PC-3 (cell line): ENCODE measurements at regions of chr2 and their contacts with region 1.

Region 1: DNA sequence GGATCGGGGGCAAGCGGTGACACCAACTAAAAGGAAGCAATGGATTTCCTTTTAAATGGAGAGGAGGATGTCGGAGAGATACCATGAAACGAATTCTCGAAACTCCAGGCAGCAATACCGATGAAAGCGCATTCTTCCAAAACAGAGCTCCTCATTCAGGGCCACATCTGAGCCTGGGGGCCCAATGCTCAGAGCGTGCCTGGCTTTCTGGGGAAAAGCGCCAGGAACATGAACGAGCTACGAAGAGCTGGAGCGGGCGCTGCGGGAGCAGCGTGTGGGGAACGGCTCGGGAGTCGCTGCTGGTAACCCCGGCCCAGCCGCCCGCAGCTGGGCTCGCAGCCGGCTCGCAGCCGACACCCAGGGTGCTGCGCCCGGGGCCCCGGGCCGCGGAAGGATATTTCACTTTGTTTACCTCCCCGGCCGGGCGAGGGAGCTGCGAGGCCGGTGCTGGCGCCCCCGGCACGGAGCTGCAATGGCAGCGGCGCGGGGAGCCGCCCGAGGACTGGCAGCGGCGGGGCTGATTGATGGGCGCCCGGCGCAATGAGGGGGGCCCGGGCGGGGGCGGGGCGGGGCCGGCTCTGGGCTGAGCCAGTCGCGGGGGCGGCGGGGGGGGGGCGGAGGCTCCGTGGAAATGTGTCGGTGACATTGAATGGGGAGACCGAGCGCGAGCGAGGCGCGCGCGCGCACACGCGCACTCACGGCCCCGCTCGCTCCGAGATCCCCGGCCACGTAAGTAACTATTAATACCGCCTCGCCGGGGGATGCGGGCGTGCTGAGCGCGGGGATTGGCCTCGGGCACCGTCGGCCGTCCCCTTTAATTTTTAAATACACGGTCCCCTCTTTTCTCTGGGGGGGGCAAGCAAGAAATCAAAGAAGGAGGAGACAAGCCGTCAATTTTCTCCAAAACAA is at the start of gene TRIB2:
- DNase-seq: peak; percentile 82
- ATAC-seq: peak; percentile 53
- H3K4me3 ChIP-seq: peak within 1 kb of the TSS; percentile 95
- H3K27ac ChIP-seq: peak within 1 kb of the TSS; percentile 99
- H3K4me1 ChIP-seq: peaks cover 34% of the 10 kb centered on the region
- H3K27me3 ChIP-seq: no peaks in the 10 kb centered on the region
- CTCF ChIP-seq: peak; percentile 34; the same call in 1 of the 2 replicates
- total RNA-seq, gene TRIB2: 35.2 and 51.8 TPM in 2 replicates

Region 2: DNA sequence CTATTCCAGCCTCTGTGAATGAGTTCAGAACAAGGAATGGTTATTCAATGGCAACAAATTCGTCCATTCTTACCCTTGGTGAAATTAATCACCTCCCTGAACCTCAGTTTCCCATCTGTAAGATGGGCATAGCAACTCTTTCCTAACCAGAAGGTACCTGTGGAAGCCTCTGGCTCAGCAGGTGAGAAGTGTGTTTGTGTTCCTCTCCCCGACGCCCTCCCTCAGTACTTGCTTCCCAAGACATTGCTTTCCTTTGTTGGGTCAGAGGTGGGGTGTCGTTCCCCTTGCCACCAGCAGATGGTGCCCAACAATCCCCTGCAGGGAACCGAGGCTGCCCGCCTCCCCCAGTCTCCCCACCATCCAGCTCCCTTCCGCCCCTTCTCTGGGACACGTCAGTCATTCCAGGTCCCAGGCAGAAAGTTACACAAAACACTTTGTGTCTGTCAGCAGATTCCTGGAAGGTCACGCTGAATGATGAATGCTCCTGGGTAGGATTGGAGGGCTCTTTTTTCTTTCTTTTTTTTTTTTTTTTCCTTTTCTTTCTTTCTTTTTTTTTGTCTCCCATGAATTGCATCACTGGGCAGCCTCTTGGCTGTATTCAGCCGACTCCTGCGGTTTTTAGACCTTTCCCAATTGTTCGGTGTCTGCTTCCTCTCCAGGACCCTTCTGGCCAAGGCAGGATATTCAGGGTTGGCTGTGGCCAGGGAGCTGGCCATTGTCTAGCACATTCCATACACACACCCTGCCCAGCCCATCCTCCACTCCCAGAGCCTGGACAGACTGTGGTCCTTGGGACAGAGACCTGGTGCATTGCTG is 852.8 kb before region 1 on chr2:
- CTCF ChIA-PET with region 1: interaction called, 7 read pairs
- POLR2A ChIA-PET with region 1: no interaction called
- intact Hi-C with region 1: loop called (anchors 1 kb)
- DNase-seq: peak; percentile 93
- ATAC-seq: peak; percentile 96
- H3K4me3 ChIP-seq: no peak overlapping the region
- H3K27ac ChIP-seq: peak overlapping the region; percentile 44
- H3K4me1 ChIP-seq: peaks cover 10% of the 10 kb centered on the region
- H3K27me3 ChIP-seq: no peaks in the 10 kb centered on the region
- CTCF ChIP-seq: peak; percentile 94

Region 3: GRCh38 chr2:12176623-12177454 is 539.7 kb before region 1 on chr2:
- CTCF ChIA-PET with region 1: no interaction called
- POLR2A ChIA-PET with region 1: no interaction called
- intact Hi-C with region 1: loop called (anchors 2 kb)
- DNase-seq: peak; percentile 88
- ATAC-seq: peak; percentile 99
- H3K4me3 ChIP-seq: no peak overlapping the region
- H3K27ac ChIP-seq: peak overlapping the region; percentile 22
- H3K4me1 ChIP-seq: peaks cover 17% of the 10 kb centered on the region
- H3K27me3 ChIP-seq: no peaks in the 10 kb centered on the region
- CTCF ChIP-seq: no peak

Region 4: DNA sequence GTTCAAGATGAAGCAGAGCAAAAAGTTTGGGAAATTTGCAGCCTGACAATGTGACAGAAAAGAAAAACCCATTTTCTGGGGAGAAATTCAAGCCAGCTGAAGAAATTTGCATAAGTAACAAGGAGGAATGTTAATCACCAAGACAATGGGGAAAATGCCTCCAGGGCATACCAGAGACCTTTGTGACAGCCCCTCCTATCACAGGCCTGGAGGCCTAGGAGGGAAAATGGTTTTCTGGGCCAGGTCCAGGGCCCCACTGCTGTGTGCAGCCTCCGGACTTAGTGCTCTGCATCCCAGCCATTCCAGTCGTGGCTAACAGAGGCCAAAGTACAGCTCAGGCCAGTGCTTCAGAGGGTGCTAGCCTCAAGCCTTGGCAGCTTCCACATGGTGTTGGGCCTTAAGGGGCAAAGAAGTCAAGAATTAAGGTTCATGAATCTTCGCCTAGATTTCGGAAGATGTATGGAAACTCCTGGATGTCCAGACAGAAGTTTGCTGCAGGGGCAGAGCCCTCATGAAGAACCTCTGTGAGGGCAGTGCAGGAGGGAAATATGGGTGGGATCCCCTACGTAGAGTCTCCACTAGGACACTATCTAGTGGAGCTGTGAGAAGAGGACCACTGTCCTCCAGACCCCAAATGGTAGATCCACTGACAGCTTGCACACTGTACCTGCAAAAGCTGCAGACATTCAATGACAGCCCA is 313.9 kb before region 1 on chr2:
- CTCF ChIA-PET with region 1: no interaction called
- POLR2A ChIA-PET with region 1: no interaction called
- intact Hi-C with region 1: no loop called
- DNase-seq: no peak
- ATAC-seq: no peak
- H3K4me3 ChIP-seq: no peak overlapping the region
- H3K27ac ChIP-seq: no peak overlapping the region
- H3K4me1 ChIP-seq: peaks cover 4% of the 10 kb centered on the region; the same call in 1 of the 2 replicates
- H3K27me3 ChIP-seq: no peaks in the 10 kb centered on the region
- CTCF ChIP-seq: no peak

Region 5: GRCh38 chr2:12430407-12431133 is 286.0 kb before region 1 on chr2:
- CTCF ChIA-PET with region 1: no interaction called
- POLR2A ChIA-PET with region 1: interaction called, 3 read pairs
- intact Hi-C with region 1: loop called (anchors 5 kb)
- DNase-seq: peak; percentile 32
- ATAC-seq: peak; percentile 65
- H3K4me3 ChIP-seq: no peak overlapping the region
- H3K27ac ChIP-seq: 0 out of 2 replicates have a peak overlapping the region, but pooled peaks have one; percentile 1
- H3K4me1 ChIP-seq: peaks cover 20% of the 10 kb centered on the region
- H3K27me3 ChIP-seq: no peaks in the 10 kb centered on the region
- CTCF ChIP-seq: no peak

Region 6: DNA sequence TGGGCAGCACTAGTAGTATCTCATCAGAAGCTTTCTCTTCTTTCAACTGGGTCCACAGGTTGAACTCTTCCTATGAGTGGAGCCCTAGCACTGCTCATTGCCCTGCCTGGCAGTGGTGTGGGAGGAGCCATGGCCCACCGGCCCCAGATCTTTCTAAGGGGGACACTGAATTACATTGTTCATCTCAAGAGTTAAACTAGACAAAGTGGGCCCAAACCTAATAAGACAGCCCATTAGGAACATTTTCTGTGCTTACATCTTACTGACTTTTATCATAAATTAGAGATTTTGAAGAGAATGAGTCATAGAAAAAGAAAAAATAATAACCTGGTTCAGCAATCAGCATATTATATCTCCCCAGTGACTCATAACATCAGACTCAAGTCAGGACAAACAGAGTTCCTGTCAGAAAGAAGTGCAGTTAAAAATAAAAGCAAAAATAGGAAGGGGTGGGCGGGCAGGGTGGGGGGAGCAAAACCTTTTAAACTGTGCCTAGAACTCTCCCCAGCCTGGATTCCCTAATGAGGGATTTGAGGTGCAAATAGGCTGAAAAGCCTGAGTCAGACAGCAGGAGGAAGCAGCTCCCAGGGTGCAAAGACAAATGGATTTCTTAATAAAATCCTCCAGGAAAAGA is 161.4 kb before region 1 on chr2:
- CTCF ChIA-PET with region 1: interaction called, 5 read pairs
- POLR2A ChIA-PET with region 1: interaction called, 3 read pairs
- intact Hi-C with region 1: loop called (anchors 2 kb)
- DNase-seq: peak; percentile 66
- ATAC-seq: peak; percentile 57
- H3K4me3 ChIP-seq: peak overlapping the region; percentile 25; the same call in 1 of the 2 replicates
- H3K27ac ChIP-seq: peak overlapping the region; percentile 82
- H3K4me1 ChIP-seq: peaks cover 32% of the 10 kb centered on the region
- H3K27me3 ChIP-seq: no peaks in the 10 kb centered on the region
- CTCF ChIP-seq: 0 out of 2 replicates have a peak, but pooled peaks have one; percentile 22

Region 7: DNA sequence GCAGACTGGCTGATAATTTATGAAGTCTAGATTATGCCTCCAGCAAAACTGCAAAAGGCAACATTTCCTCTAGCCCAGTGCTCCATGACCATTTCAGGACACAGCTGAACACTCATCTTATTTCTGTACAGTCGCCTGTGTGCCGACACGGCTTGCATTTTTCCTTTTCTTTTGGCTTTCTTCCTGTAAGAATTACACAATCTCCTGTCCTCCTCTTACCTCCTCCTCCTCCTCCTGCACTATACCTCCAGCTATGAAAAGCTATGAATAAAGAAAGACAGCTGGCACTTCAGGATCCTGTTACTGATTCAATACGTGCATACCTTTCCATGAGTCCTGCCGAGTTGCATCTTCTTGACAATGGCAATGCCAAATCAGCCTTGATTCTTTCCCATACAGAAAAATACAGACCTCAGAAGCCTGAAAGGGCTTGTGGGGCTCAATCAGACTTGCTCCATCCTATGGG is 32.0 kb before region 1 on chr2:
- CTCF ChIA-PET with region 1: interaction called, 5 read pairs
- POLR2A ChIA-PET with region 1: interaction called, 5 read pairs
- intact Hi-C with region 1: loop called (anchors 1 kb)
- DNase-seq: peak; percentile 92
- ATAC-seq: peak; percentile 69
- H3K4me3 ChIP-seq: peak overlapping the region; percentile 5; the same call in 1 of the 2 replicates
- H3K27ac ChIP-seq: peak overlapping the region; percentile 73
- H3K4me1 ChIP-seq: peaks cover 41% of the 10 kb centered on the region
- H3K27me3 ChIP-seq: no peaks in the 10 kb centered on the region
- CTCF ChIP-seq: no peak

Region 8: DNA sequence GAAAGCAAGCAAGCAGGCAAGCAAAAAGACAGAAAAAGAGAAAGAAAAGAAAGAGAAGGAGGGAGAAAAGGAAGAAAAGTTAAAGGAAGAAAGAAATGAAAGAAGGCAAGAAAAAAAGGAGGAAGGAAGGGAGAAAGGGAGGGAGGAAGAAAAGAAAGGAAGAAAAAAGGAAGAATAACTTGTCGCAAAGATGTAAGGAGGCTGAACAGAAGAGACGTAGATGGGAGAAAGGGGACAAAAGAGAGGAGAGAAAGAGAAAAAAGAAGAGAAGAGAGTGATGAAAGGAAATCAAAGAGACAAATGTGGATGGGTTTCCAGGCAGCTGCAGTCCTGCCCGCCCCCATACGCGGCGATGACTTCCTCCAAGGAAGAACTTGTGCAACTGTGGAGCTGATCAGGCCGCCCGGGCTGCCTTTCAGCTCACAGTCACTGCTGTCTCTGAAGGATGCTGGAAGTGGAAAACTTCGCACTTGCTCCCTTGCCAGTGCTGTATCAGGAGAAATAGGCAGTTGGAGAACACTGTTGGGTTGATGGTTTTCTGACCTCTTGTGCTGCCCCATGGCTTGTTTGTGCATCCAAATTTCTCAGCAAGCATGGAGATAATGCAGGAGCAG is 53.1 kb after region 1 on chr2:
- CTCF ChIA-PET with region 1: no interaction called
- POLR2A ChIA-PET with region 1: no interaction called
- intact Hi-C with region 1: no loop called
- DNase-seq: no peak
- ATAC-seq: no peak
- H3K4me3 ChIP-seq: no peak overlapping the region
- H3K27ac ChIP-seq: no peak overlapping the region
- H3K4me1 ChIP-seq: no peaks in the 10 kb centered on the region
- H3K27me3 ChIP-seq: 0 out of 2 replicates have a peak, but pooled peaks cover 13% of the 10 kb centered on the region
- CTCF ChIP-seq: no peak

Region 9: GRCh38 chr2:12931186-12931844 is 214.8 kb after region 1 on chr2:
- CTCF ChIA-PET with region 1: interaction called, 9 read pairs
- POLR2A ChIA-PET with region 1: interaction called, 22 read pairs
- intact Hi-C with region 1: loop called (anchors 1 kb)
- DNase-seq: peak; percentile 67
- ATAC-seq: peak; percentile 16; the same call in 1 of the 2 replicates
- H3K4me3 ChIP-seq: no peak overlapping the region
- H3K27ac ChIP-seq: peak overlapping the region; percentile 97
- H3K4me1 ChIP-seq: peaks cover 33% of the 10 kb centered on the region
- H3K27me3 ChIP-seq: no peaks in the 10 kb centered on the region
- CTCF ChIP-seq: peak; percentile 94